ENCODE measurements at regions of chr20 and their contacts with region 1.

Region 1: DNA sequence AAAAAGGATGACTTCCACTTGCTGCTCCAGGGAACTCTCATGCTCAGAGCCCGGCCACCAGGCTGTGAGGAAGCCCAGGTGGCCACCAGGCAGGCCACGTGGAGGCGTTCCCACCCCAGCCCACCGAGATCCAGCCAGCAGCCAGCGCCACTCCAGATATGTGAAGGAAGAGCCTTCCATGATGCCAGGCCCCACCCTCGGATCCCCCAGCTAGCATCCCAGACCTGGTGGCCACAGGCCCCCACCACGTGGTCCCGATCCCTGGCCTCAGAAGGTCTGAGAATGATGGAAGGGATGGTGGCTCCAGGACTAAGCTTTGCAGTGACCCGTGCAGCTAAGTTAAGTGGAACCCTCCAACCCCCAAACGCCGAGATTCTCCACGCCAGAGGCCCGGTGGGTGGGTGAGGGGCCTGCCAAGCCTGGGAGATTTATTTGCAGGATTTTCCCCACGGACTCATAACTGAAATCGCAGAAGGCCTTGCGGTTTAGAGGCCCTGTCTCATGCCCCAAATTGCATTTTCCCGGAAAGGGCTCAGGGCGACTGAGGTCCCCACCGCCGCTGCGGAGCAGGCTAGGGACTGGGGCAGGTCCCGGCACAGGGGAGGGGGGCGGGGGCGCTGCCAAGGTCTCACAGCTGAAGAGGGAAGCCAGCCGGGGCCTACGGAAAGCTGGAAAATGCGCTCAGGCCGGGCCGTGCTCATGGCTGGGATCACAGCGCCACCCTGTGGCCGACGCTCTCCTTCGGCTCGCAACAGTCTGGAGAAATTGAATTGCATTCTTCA is 31.1 kb upstream of the CST7 start:
- DNase-seq: peak; percentile 75
- ATAC-seq: peak; percentile 76
- H3K4me3 Mint-ChIP-seq: no peak overlapping the region
- H3K27ac Mint-ChIP-seq: no peak overlapping the region
- H3K4me1 Mint-ChIP-seq: peaks cover 6% of the 10 kb centered on the region
- H3K27me3 Mint-ChIP-seq: peaks cover 2% of the 10 kb centered on the region

Region 2: GRCh38 chr20:23937303-23938117 is 980.5 kb before region 1 on chr20:
- CTCF ChIA-PET with region 1: interaction called, 4 read pairs
- POLR2A ChIA-PET with region 1: no interaction called
- intact Hi-C with region 1: loop called in 1 of 2 experiments (anchors 2 kb)
- DNase-seq: peak; percentile 74
- ATAC-seq: peak; percentile 90
- H3K4me3 Mint-ChIP-seq: no peak overlapping the region
- H3K27ac Mint-ChIP-seq: no peak overlapping the region
- H3K4me1 Mint-ChIP-seq: no peaks in the 10 kb centered on the region
- H3K27me3 Mint-ChIP-seq: no peaks in the 10 kb centered on the region

Region 3: GRCh38 chr20:24001712-24002405 is 916.1 kb before region 1 on chr20:
- CTCF ChIA-PET with region 1: interaction called, 3 read pairs
- POLR2A ChIA-PET with region 1: no interaction called
- intact Hi-C with region 1: loop called in 1 of 2 experiments (anchors 10 kb)
- DNase-seq: no peak
- ATAC-seq: no peak
- H3K4me3 Mint-ChIP-seq: no peak overlapping the region
- H3K27ac Mint-ChIP-seq: no peak overlapping the region
- H3K4me1 Mint-ChIP-seq: no peaks in the 10 kb centered on the region
- H3K27me3 Mint-ChIP-seq: no peaks in the 10 kb centered on the region

Region 4: GRCh38 chr20:24160563-24161375 is 757.2 kb before region 1 on chr20:
- CTCF ChIA-PET with region 1: no interaction called
- POLR2A ChIA-PET with region 1: no interaction called
- intact Hi-C with region 1: loop called in 1 of 2 experiments (anchors 2 kb)
- DNase-seq: peak; percentile 55
- ATAC-seq: no peak
- H3K4me3 Mint-ChIP-seq: no peak overlapping the region
- H3K27ac Mint-ChIP-seq: no peak overlapping the region
- H3K4me1 Mint-ChIP-seq: no peaks in the 10 kb centered on the region
- H3K27me3 Mint-ChIP-seq: no peaks in the 10 kb centered on the region

Region 5: DNA sequence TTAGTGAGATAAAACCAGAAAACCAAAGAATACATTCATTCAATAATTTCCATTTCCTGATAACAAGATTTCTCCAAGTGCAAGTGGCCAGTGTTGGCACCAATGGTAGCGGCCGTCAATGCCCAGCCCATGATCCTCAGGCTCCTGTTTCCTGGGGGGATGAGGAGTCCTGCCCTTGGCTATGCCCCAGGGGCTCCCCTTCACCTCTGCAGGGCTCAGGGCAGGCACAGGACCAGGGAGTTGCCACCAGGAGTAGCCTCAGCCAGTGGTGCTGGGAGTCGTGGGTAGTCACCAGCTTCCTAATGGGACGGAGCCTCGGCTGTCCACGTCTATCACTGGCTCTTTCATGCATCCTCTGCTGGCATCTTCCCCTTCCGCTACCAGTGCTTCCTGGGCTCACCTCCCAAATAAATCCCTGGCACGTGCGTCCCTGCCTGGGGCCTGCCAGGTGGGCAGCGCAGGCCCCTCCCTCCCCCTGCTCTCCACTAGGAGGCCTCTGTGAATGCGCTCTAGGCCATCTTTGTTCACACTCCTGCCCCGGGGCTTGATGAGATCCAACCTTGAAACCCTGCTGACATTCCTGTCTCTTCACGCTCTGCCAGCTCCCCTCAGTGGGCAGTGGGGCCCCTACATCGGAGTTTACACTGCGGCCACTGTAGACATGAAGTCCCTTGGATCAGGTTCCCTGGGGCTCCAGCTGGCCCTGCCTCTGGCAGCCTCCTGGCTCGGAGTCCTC is 232.9 kb before region 1 on chr20:
- CTCF ChIA-PET with region 1: no interaction called
- POLR2A ChIA-PET with region 1: no interaction called
- intact Hi-C with region 1: loop called in 1 of 2 experiments (anchors 10 kb)
- DNase-seq: no peak
- ATAC-seq: no peak
- H3K4me3 Mint-ChIP-seq: no peak overlapping the region
- H3K27ac Mint-ChIP-seq: no peak overlapping the region
- H3K4me1 Mint-ChIP-seq: no peaks in the 10 kb centered on the region
- H3K27me3 Mint-ChIP-seq: peaks cover 2% of the 10 kb centered on the region

Region 6: GRCh38 chr20:24783631-24784492 is 134.1 kb before region 1 on chr20:
- CTCF ChIA-PET with region 1: interaction called, 3 read pairs
- POLR2A ChIA-PET with region 1: no interaction called
- intact Hi-C with region 1: loop called in 1 of 2 experiments (anchors 2 kb)
- DNase-seq: peak; percentile 36
- ATAC-seq: no peak
- H3K4me3 Mint-ChIP-seq: no peak overlapping the region
- H3K27ac Mint-ChIP-seq: no peak overlapping the region
- H3K4me1 Mint-ChIP-seq: no peaks in the 10 kb centered on the region
- H3K27me3 Mint-ChIP-seq: peaks cover 3% of the 10 kb centered on the region

Region 7: DNA sequence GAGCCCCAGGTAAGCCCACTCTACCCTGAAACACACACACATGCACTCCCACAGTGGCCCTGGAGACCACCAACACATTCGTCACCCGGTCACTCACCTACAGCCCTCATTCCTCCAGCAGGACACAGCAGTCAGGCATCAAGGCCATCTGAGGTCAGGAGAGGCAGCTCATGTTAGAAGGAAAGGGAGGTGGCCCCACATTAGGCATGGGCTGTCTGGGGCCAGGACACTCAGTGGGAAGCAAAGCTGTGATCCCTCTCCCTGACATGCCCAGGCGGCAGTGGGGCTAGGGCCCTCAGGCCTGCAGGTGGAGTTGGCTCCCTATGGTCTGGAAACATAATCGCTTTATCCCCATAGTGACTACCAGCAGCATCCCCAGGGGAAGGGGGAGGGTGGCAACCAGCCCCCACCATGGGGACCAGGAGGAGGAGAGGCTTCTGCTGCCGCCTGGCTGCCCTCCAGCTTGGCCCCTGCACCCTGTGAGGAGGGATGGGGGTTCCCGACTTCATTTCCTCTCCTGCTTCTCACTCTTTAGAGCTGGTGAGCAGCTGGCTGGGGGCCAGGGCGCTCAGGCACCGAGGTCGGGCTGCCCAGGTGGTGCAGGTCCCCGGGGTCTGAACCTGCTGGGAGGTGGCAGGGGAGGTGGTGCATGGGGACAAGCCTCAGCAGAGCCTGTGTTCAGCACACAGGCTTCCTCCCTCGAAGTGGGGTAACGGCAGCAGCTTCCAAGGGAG is 45.5 kb before region 1 on chr20:
- CTCF ChIA-PET with region 1: no interaction called
- POLR2A ChIA-PET with region 1: no interaction called
- intact Hi-C with region 1: no loop called
- DNase-seq: no peak
- ATAC-seq: no peak
- H3K4me3 Mint-ChIP-seq: no peak overlapping the region
- H3K27ac Mint-ChIP-seq: no peak overlapping the region
- H3K4me1 Mint-ChIP-seq: no peaks in the 10 kb centered on the region
- H3K27me3 Mint-ChIP-seq: peaks cover 2% of the 10 kb centered on the region

Region 8: GRCh38 chr20:24906806-24907205 is 11.2 kb before region 1 on chr20:
- CTCF ChIA-PET with region 1: no interaction called
- POLR2A ChIA-PET with region 1: no interaction called
- intact Hi-C with region 1: no loop called
- DNase-seq: no peak
- ATAC-seq: no peak
- H3K4me3 Mint-ChIP-seq: no peak overlapping the region
- H3K27ac Mint-ChIP-seq: no peak overlapping the region
- H3K4me1 Mint-ChIP-seq: no peaks in the 10 kb centered on the region
- H3K27me3 Mint-ChIP-seq: no peaks in the 10 kb centered on the region

Region 9: DNA sequence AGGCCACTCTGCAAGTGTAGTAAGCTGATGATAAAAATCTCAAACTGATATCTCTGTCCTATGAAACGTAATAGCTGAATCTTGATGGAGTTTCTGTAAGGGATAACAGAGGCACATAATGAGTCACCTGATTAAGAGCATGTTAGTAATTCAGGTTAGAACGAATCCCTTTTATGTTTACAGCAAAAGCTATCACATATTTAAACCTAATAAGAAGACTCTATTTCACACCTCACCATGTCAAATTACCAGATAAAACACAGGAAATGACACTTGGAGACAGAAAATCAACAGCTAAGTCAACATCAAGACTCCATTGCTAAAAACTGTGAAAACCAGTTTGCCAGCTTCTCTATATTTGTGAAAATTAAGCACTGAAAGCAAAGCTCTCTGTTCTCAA is 42.9 kb after region 1 on chr20:
- CTCF ChIA-PET with region 1: no interaction called
- POLR2A ChIA-PET with region 1: no interaction called
- intact Hi-C with region 1: no loop called
- DNase-seq: no peak
- ATAC-seq: peak; percentile 16
- H3K4me3 Mint-ChIP-seq: no peak overlapping the region
- H3K27ac Mint-ChIP-seq: peak overlapping the region; percentile 42
- H3K4me1 Mint-ChIP-seq: peaks cover 13% of the 10 kb centered on the region
- H3K27me3 Mint-ChIP-seq: no peaks in the 10 kb centered on the region

Region 10: GRCh38 chr20:25318471-25319240 is 400.7 kb after region 1 on chr20:
- CTCF ChIA-PET with region 1: no interaction called
- POLR2A ChIA-PET with region 1: no interaction called
- intact Hi-C with region 1: no loop called
- DNase-seq: no peak
- ATAC-seq: no peak
- H3K4me3 Mint-ChIP-seq: no peak overlapping the region
- H3K27ac Mint-ChIP-seq: no peak overlapping the region
- H3K4me1 Mint-ChIP-seq: peaks cover 5% of the 10 kb centered on the region
- H3K27me3 Mint-ChIP-seq: no peaks in the 10 kb centered on the region